Activated naive CD4-positive, alpha-beta T cell treated with anti-CD3 and anti-CD28 coated beads for 36 hours (primary cell): ENCODE measurements at regions of chr16 and their contacts with region 1.

Region 1: GRCh38 chr16:80526425-80527061 is 14.2 kb upstream of the DYNLRB2 start:
- DNase-seq: peak; percentile 74
- H3K4me3 Mint-ChIP-seq: no peak overlapping the region
- H3K27ac Mint-ChIP-seq: no peak overlapping the region
- H3K4me1 Mint-ChIP-seq: no peaks in the 10 kb centered on the region
- H3K27me3 Mint-ChIP-seq: no peaks in the 10 kb centered on the region

Region 2: GRCh38 chr16:80369138-80369958 is 157.2 kb before region 1 on chr16:
- CTCF ChIA-PET with region 1: interaction called, 3 read pairs
- intact Hi-C with region 1: loop called (anchors 10 kb)
- DNase-seq: peak; percentile 7
- H3K4me3 Mint-ChIP-seq: no peak overlapping the region
- H3K27ac Mint-ChIP-seq: no peak overlapping the region
- H3K4me1 Mint-ChIP-seq: no peaks in the 10 kb centered on the region
- H3K27me3 Mint-ChIP-seq: no peaks in the 10 kb centered on the region

Region 3: GRCh38 chr16:80540516-80541272 is 14.2 kb after region 1 on chr16 and contains the start of gene DYNLRB2:
- CTCF ChIA-PET with region 1: interaction called, 12 read pairs
- intact Hi-C with region 1: no loop called
- DNase-seq: peak; percentile 94
- H3K4me3 Mint-ChIP-seq: peak within 1 kb of the TSS; percentile 95
- H3K27ac Mint-ChIP-seq: peak within 1 kb of the TSS; percentile 97
- H3K4me1 Mint-ChIP-seq: peaks cover 16% of the 10 kb centered on the region
- H3K27me3 Mint-ChIP-seq: no peaks in the 10 kb centered on the region
- total RNA-seq, gene DYNLRB2: not detected

Region 4: DNA sequence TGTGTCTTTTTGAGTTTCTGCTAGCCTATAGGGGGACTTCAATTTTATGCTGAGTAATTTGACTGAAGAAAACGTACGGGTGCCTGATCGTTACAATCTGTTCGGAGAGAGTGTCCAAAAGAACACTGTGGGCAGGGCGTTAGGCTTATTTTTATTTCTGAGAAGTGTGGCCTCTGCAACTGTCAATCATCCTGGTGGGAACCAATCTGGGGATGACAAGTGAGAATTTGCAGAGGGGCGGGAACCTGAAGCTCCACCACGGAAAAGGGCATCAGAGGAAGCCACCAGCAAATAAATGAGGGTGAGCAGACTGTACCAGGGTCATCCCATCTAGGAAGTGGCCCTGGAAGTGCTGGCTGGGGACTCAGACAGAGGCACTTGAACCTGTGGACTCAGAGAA is 289.8 kb after region 1 on chr16:
- CTCF ChIA-PET with region 1: interaction called, 22 read pairs
- intact Hi-C with region 1: no loop called
- DNase-seq: no peak
- H3K4me3 Mint-ChIP-seq: no peak overlapping the region
- H3K27ac Mint-ChIP-seq: no peak overlapping the region
- H3K4me1 Mint-ChIP-seq: no peaks in the 10 kb centered on the region
- H3K27me3 Mint-ChIP-seq: peaks cover 6% of the 10 kb centered on the region

Region 5: DNA sequence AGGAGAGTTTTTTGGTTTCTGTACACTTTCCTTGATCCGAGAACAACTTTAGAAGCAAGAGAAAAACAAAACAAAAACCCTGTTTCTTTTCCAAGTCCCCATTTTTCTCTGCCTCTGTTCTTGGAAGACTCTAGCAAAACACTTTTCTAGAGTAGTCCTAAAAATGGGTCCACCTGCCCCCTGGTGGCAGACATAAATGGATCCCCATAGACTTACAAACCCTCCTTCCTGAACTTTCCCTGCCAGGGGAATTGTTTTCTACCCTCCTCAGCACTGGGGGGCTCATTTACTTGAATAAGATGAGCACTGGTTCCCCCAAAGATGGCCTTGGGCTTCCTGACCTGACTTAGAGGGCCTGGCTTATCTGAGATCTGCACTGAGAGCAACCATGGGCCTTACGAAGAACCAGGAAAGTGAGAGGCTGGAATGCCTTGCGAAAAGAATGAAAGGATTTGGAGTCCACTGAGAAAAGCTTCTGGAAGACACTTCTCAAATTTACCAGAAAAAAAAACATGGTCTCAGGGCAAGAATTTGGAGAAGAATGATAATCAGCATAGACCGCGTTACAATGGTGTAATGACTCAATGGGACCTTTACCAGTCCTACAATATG is 325.8 kb after region 1 on chr16:
- CTCF ChIA-PET with region 1: interaction called, 14 read pairs
- intact Hi-C with region 1: loop called (anchors 1 kb)
- DNase-seq: peak; percentile 56
- H3K4me3 Mint-ChIP-seq: no peak overlapping the region
- H3K27ac Mint-ChIP-seq: no peak overlapping the region
- H3K4me1 Mint-ChIP-seq: no peaks in the 10 kb centered on the region
- H3K27me3 Mint-ChIP-seq: no peaks in the 10 kb centered on the region